CD8-positive, alpha-beta T cell (primary cell): ENCODE measurements at regions of chr15 and their contacts with region 1.

Region 1: DNA sequence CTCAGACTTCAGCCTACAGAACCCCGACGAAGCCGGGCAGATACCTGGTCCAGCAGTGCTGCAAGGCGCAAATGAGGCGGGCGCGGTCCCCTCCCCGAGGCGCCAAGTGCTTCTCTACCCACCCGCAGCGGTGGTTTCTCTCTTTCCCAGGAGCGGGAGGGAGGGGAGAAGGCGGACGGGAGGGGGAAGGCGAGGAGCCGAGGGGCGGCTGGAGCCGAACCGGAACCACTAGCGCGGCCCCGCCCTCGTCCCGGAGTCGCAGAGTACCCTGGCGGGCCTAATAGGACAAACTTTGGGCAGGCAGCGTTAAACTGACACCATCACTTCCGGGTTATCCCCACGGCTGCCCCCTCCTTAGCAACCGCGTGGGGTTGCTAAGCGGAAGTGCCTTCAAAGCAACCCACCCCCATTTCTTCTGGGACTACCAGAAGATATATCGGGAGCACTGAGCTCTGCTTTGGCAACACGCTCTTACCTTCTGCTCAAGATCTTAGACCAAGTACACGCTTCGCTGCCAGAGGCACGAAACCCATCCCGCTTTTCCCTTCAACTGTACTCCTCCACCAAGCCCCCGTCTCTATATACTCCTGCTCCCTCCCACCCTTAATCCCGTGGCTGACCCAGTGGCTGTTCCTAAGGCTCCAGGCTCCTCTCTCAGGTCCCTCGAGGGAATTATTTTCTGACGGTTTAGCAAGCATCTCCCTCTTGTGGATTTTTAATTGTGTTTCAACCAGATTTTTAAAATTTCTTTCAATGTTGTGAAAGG is at the start of gene CSNK1G1:
- DNase-seq: peak; percentile 77 to 97 (median 92)
- ATAC-seq: peak; percentile 96
- H3K4me3 ChIP-seq: peak within 1 kb of the TSS; percentile 86 to 91
- H3K4me3 Mint-ChIP-seq: peak within 1 kb of the TSS; percentile 94
- H3K27ac ChIP-seq: peak within 1 kb of the TSS; percentile 67 to 74
- H3K27ac Mint-ChIP-seq: peak within 1 kb of the TSS; percentile 89
- H3K4me1 ChIP-seq: peaks cover 9% of the 10 kb centered on the region
- H3K4me1 Mint-ChIP-seq: peaks cover 18% of the 10 kb centered on the region
- H3K27me3 ChIP-seq: no peaks in the 10 kb centered on the region
- H3K27me3 Mint-ChIP-seq: no peaks in the 10 kb centered on the region
- CTCF ChIP-seq: peak; percentile 43
- total RNA-seq, gene CSNK1G1: 10.0 to 12.9 TPM

Region 2: DNA sequence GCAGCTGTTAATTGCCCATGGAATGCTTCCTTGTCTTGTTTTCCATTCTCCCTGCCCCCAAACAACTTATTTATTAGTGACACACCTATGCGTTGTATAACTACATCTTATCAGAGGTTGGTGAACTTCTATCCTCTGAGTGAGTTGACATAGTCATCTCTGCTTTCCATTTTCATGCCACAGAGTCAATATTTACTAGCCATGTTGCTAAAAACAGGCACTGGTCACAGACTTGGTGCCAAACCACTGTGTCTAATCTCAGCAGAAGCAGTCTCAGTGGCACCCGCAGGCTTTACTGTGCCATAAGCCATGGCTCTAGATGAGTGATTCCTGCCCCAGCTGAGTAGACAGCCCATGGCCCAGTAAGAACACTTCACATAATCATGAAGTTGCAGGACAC is 336.4 kb before region 1 on chr15:
- CTCF ChIA-PET with region 1: no interaction called
- POLR2A ChIA-PET with region 1: no interaction called
- intact Hi-C with region 1: no loop called
- DNase-seq: no peak
- ATAC-seq: no peak
- H3K4me3 ChIP-seq: no peak overlapping the region
- H3K4me3 Mint-ChIP-seq: no peak overlapping the region
- H3K27ac ChIP-seq: no peak overlapping the region
- H3K27ac Mint-ChIP-seq: no peak overlapping the region
- H3K4me1 ChIP-seq: no peaks in the 10 kb centered on the region
- H3K4me1 Mint-ChIP-seq: no peaks in the 10 kb centered on the region
- H3K27me3 ChIP-seq: no peaks in the 10 kb centered on the region
- H3K27me3 Mint-ChIP-seq: no peaks in the 10 kb centered on the region
- CTCF ChIP-seq: no peak

Region 3: DNA sequence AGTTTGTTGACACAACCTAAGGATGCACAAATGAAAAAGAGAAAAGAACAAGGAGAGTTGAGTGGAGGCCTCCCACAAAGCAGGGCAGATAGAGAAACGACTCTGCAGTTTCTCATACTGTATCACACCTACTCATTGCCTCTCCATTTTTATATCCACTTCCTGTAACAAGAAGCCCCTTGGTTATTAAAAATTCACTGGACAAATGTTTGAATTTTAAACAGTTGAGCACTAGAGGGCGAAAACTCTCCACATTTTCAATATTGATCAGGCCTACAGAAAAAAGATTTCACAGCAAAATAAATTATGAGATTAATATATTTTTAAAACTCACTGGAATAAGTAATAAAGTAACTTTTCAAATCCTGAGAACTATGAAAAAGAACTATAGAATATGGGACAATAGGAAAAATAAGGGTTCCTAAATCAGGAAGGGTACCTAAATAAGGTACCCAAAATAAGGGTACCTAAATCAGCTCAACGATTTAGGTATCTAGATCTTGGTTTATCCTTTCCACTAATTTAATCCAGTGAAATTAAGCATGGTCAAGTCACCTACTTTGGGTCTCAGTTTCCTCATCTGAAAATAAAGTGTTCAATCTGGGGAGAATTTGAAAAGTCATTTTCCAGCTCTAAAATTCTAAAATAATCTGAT is 146.3 kb before region 1 on chr15:
- CTCF ChIA-PET with region 1: no interaction called
- POLR2A ChIA-PET with region 1: no interaction called
- intact Hi-C with region 1: loop called in 1 of 2 experiments (anchors 1 kb)
- DNase-seq: peak in 2 of 9 experiments; percentile 20 to 39
- ATAC-seq: no peak
- H3K4me3 ChIP-seq: no peak overlapping the region
- H3K4me3 Mint-ChIP-seq: no peak overlapping the region
- H3K27ac ChIP-seq: no peak overlapping the region
- H3K27ac Mint-ChIP-seq: no peak overlapping the region
- H3K4me1 ChIP-seq: no peaks in the 10 kb centered on the region
- H3K4me1 Mint-ChIP-seq: no peaks in the 10 kb centered on the region
- H3K27me3 ChIP-seq: no peaks in the 10 kb centered on the region
- H3K27me3 Mint-ChIP-seq: no peaks in the 10 kb centered on the region
- CTCF ChIP-seq: peak; percentile 59

Region 4: GRCh38 chr15:64288608-64289398 is 67.3 kb before region 1 on chr15:
- CTCF ChIA-PET with region 1: no interaction called
- POLR2A ChIA-PET with region 1: no interaction called
- intact Hi-C with region 1: loop called in 1 of 2 experiments (anchors 10 kb)
- DNase-seq: no peak
- ATAC-seq: no peak
- H3K4me3 ChIP-seq: no peak overlapping the region
- H3K4me3 Mint-ChIP-seq: no peak overlapping the region
- H3K27ac ChIP-seq: no peak overlapping the region
- H3K27ac Mint-ChIP-seq: no peak overlapping the region
- H3K4me1 ChIP-seq: no peaks in the 10 kb centered on the region
- H3K4me1 Mint-ChIP-seq: peaks cover 25% of the 10 kb centered on the region
- H3K27me3 ChIP-seq: no peaks in the 10 kb centered on the region
- H3K27me3 Mint-ChIP-seq: no peaks in the 10 kb centered on the region
- CTCF ChIP-seq: no peak

Region 5: GRCh38 chr15:64381000-64381752 is 25.0 kb after region 1 on chr15 and contains the start of gene PCLAF:
- CTCF ChIA-PET with region 1: interaction called, 3 read pairs
- POLR2A ChIA-PET with region 1: interaction called, 4 read pairs
- intact Hi-C with region 1: loop called (anchors 1 kb)
- DNase-seq: peak; percentile 80 to 95 (median 91)
- ATAC-seq: peak; percentile 100
- H3K4me3 ChIP-seq: peak within 1 kb of the TSS; percentile 62 to 65
- H3K4me3 Mint-ChIP-seq: peak within 1 kb of the TSS; percentile 91
- H3K27ac ChIP-seq: no peak within 1 kb of the TSS
- H3K27ac Mint-ChIP-seq: peak within 1 kb of the TSS; percentile 8
- H3K4me1 ChIP-seq: peaks cover 5% of the 10 kb centered on the region
- H3K4me1 Mint-ChIP-seq: peaks cover 12% of the 10 kb centered on the region
- H3K27me3 ChIP-seq: no peaks in the 10 kb centered on the region
- H3K27me3 Mint-ChIP-seq: no peaks in the 10 kb centered on the region
- CTCF ChIP-seq: no peak
- total RNA-seq, gene PCLAF: 0.65 to 0.83 TPM

Region 6: DNA sequence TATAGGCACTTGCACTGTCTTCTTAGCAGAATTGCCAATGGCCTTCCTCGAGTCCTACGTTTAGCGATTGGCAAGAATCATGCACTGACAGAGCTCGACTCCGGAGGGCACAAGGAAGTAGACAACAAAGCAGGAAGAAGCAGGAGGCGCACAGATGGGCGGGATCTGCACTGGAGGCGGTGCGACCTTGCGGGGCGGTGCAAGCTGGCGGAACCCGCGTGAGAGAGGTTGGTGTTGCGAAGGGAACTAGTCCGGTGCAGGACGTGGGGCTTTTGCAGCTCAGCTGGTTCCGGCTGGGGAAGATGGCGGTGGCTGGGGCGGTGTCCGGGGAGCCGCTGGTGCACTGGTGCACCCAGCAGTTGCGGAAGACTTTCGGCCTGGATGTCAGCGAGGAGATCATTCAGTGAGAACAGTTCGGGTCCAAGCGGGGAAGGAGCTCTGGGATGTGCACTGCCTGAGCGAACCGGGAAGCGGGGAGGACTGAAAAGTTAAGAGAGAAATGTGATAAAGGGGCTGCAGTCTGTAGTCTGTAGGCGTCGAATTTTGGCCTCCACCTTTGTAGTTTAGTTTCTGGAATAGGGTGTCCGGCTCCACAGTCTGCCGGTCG is 31.5 kb after region 1 on chr15 and contains the start of gene TRIP4:
- CTCF ChIA-PET with region 1: interaction called, 3 read pairs
- POLR2A ChIA-PET with region 1: interaction called, 7 read pairs
- intact Hi-C with region 1: loop called (anchors 1 kb)
- DNase-seq: peak; percentile 93 to 98 (median 96)
- ATAC-seq: peak; percentile 99
- H3K4me3 ChIP-seq: peak within 1 kb of the TSS; percentile 86 to 98
- H3K4me3 Mint-ChIP-seq: peak within 1 kb of the TSS; percentile 99
- H3K27ac ChIP-seq: peak within 1 kb of the TSS; percentile 51 to 69
- H3K27ac Mint-ChIP-seq: peak within 1 kb of the TSS; percentile 97
- H3K4me1 ChIP-seq: peaks cover 19% of the 10 kb centered on the region
- H3K4me1 Mint-ChIP-seq: peaks cover 21% of the 10 kb centered on the region
- H3K27me3 ChIP-seq: no peaks in the 10 kb centered on the region
- H3K27me3 Mint-ChIP-seq: no peaks in the 10 kb centered on the region
- CTCF ChIP-seq: no peak
- total RNA-seq, gene TRIP4: 10.7 to 11.2 TPM

Region 7: DNA sequence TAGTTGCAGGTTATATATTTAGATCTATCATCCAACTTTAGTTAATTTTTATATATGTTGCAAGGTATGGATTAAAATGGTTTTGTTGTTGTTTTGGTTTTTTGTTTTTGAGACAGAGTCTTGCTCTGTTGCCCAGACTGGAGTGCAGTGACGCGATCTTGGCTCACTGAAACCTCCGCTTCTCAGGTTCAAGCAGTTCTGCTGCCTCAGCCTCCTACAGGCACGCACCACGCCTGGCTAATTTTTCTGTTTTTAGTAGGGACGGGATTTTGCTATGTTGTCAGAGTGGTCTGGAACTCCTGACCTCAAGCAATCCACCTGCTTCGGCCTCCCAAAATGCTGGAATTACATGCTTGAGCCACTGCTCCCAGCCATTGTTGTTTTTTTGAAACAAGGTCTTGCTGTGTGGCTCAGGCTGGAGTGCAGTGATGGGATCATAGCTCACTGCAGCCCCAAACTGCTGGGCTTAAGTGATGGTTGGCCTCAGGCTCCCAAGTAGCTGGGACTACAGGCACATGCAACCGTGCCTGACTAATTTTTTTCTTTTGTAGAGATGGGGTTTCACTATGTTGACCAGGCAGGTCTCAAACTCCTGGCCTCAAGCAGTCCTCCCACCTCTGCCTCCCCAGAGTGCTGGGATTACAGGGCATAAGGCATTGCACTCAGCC is 196.3 kb after region 1 on chr15:
- CTCF ChIA-PET with region 1: no interaction called
- POLR2A ChIA-PET with region 1: no interaction called
- intact Hi-C with region 1: no loop called
- DNase-seq: no peak
- ATAC-seq: no peak
- H3K4me3 ChIP-seq: no peak overlapping the region
- H3K4me3 Mint-ChIP-seq: no peak overlapping the region
- H3K27ac ChIP-seq: no peak overlapping the region
- H3K27ac Mint-ChIP-seq: no peak overlapping the region
- H3K4me1 ChIP-seq: peaks cover 29% of the 10 kb centered on the region
- H3K4me1 Mint-ChIP-seq: peaks cover 50% of the 10 kb centered on the region
- H3K27me3 ChIP-seq: no peaks in the 10 kb centered on the region
- H3K27me3 Mint-ChIP-seq: no peaks in the 10 kb centered on the region
- CTCF ChIP-seq: no peak